ENCODE measurements at regions of chr1 and their contacts with region 1.

Region 1: GRCh38 chr1:109773146-109773899 is 9.6 kb upstream of the EPS8L3 start:
- DNase-seq: peak; percentile 84
- ATAC-seq: peak; percentile 88

Region 2: DNA sequence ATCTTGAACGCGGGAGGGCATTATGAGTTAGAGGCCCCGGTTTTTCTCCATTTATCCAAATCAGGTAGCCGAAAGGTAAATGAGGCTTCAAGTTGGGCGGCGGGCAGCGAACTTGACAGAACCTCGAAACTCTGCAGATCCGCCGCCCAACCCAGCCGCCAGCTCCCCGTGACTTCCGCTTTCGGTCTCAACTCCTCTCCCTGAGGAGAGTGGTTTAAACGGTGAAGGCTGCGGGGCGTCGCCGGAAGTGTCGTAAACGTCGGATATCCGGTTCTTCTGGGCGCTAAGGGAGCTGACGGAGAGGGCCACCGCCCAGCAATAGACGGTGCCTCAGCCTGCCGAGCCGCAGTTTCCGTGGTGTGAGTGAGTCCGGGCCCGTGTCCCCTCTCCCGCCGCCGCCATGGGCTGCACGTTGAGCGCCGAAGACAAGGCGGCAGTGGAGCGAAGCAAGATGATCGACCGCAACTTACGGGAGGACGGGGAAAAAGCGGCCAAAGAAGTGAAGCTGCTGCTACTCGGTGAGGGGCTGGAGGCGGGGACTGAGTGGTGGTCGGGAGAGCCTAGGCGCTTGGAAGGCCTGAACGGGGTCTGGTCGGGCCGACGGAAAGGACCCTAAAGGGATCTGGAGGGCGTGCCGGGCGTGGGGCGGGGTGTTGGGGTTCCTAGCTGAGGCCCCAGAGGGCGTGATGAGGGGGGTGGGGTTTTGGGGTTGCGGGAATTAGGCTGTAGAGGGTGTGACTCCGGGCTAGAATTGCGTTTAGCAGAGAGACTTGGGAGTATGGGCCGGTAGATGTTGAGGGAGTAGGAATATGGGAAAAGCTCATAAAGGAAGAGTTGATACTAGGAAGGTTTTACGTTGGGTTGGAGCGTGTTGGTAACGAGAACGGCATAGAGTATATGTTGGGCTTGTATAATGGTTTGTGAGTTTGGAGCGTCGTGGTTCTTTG is 224.7 kb before region 1 on chr1 and contains the start of gene GNAI3:
- intact Hi-C with region 1: loop called (anchors 5 kb)
- DNase-seq: peak; percentile 96
- ATAC-seq: peak; percentile 97
- total RNA-seq, gene GNAI3: 2.2 TPM

Region 3: GRCh38 chr1:109643385-109644230 is 129.7 kb before region 1 on chr1:
- intact Hi-C with region 1: loop called (anchors 5 kb)
- DNase-seq: peak; percentile 91
- ATAC-seq: peak; percentile 90

Region 4: GRCh38 chr1:109983380-109984189 is 210.3 kb after region 1 on chr1:
- intact Hi-C with region 1: loop called (anchors 2 kb)
- DNase-seq: peak; percentile 26
- ATAC-seq: peak; percentile 1

Measured in left ventricle myocardium superior (tissue), 1 donor.